ENCODE measurements at regions of chr12 and their contacts with region 1.

Region 1: DNA sequence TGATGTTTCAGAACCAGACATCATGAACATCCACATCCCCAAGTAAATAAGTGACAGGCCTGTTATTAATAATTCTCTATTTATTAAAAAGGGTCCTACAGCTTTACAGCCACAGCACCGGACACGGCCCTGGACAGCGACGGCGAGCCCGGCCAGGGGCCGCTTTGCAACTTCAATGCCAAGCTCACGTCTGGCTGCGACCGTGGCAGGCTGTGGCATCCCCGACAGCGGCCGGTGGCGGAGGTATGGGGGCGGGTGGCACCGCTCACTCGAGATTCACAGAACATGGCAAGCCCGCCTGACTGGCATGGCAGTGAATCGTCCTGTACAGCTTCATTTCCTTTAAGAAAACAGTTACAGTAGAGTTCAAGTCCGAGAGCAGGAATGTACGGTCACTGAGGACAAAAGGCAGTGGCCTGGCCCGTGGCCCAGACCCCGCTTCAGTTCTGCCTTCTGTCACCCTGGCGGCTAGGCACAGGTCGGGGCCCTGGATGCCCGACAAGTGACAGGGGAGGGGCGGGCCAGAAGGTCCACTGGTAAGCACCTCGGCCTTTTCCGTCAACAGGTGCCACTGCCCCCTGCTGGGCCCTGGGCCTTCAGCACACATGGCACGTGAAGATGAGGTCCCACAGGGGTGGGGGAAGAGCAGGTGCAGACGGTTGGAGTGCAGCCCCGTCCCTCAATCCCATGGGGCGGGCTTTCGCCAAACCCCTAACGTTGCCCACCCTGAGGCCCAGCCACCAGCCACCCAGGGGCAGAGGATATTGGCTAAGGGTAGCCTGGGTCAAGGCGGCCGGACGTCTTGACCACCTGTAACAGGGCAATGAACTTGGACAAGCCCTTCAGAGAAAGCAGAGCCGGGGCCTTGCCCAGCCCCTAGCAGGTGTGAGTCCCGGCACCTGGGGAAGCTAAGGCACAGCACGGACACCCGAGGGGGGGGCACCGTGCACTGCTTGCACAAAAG is 30.3 kb downstream of the HIP1R start:
- DNase-seq: peak in 1 of 2 donors; percentile 56
- ATAC-seq: peak in 2 of 3 donors; percentile 29 to 40
- H3K4me3 ChIP-seq: no peak overlapping the region
- H3K4me3 Mint-ChIP-seq: no peak overlapping the region
- H3K27ac ChIP-seq: no peak overlapping the region
- H3K27ac Mint-ChIP-seq: peak overlapping the region; percentile 47 to 81
- H3K4me1 ChIP-seq: peaks cover 32% of the 10 kb centered on the region
- H3K4me1 Mint-ChIP-seq: peaks cover 26 to 33% of the 10 kb centered on the region in 2 donors
- H3K27me3 ChIP-seq: no peaks in the 10 kb centered on the region
- H3K27me3 Mint-ChIP-seq: no peaks in the 10 kb centered on the region
- CTCF ChIP-seq: peak; percentile 20

Region 2: GRCh38 chr12:122293081-122293480 is 572.5 kb before region 1 on chr12:
- intact Hi-C with region 1: no loop called
- DNase-seq: no peak
- ATAC-seq: no peak
- H3K4me3 ChIP-seq: no peak overlapping the region
- H3K4me3 Mint-ChIP-seq: no peak overlapping the region
- H3K27ac ChIP-seq: no peak overlapping the region
- H3K27ac Mint-ChIP-seq: no peak overlapping the region
- H3K4me1 ChIP-seq: no peaks in the 10 kb centered on the region
- H3K4me1 Mint-ChIP-seq: no peaks in the 10 kb centered on the region
- H3K27me3 ChIP-seq: no peaks in the 10 kb centered on the region
- H3K27me3 Mint-ChIP-seq: no peaks in the 10 kb centered on the region
- CTCF ChIP-seq: no peak

Region 3: DNA sequence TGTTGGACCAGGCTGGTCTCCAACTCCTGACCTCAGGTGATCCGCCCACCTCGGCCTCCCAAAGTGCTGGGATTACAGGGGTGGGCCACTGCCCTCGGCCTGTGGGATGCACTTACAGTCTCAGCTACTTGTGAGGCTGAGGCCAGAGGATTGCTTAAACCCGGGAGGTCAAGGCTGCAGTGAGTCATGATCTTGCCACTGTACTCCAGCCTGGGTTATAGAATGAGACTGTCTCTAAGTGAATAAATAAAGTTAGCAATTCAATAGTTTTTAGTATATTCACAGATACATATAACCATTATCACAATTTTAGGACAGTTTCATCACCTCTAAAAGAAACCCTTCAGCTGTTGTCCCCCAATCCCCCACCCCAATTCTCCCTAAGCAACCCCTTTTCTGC is 223.5 kb before region 1 on chr12:
- intact Hi-C with region 1: no loop called
- DNase-seq: no peak
- ATAC-seq: no peak
- H3K4me3 ChIP-seq: no peak overlapping the region
- H3K4me3 Mint-ChIP-seq: no peak overlapping the region
- H3K27ac ChIP-seq: no peak overlapping the region
- H3K27ac Mint-ChIP-seq: no peak overlapping the region
- H3K4me1 ChIP-seq: no peaks in the 10 kb centered on the region
- H3K4me1 Mint-ChIP-seq: peaks cover 0 to 5% of the 10 kb centered on the region in 2 donors
- H3K27me3 ChIP-seq: no peaks in the 10 kb centered on the region
- H3K27me3 Mint-ChIP-seq: peaks cover 0 to 6% of the 10 kb centered on the region in 2 donors
- CTCF ChIP-seq: no peak

Region 4: DNA sequence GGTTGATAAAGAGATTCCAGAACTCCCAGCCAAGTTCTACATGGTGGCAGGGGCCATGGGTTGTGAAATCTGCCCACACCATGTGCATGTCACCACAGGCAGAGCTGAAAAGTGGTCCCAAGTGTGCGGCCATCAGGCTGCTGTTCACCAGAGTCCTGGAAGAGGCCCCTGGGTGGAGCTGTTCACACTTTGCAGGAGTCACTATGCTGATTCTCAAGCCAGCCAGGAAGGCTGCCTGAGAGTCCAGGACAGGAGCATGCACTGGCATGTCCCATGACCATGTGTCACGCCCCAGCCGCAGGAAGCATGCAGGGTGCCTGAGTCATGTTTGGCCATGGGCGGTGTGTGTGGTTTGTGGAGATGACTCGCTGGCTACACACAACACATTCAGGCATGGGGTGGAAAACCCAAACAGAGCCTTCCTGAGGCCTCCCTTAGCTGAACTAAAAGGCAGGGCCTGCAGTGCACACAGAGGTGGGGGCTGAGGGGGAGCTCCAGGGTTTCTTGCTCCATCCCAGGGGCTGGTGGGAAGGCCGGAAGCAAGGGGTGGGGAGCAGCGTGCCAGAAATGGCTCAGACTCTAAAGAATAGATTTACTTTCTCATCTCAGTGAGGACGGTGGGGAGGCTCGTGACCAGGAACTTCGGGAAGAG is 81.3 kb after region 1 on chr12:
- intact Hi-C with region 1: loop called (anchors 1 kb)
- DNase-seq: peak; percentile 71 to 84
- ATAC-seq: peak; percentile 73 to 83 (median 83)
- H3K4me3 ChIP-seq: no peak overlapping the region
- H3K4me3 Mint-ChIP-seq: peak overlapping the region; percentile 89
- H3K27ac ChIP-seq: peak overlapping the region; percentile 23
- H3K27ac Mint-ChIP-seq: peak overlapping the region; percentile 89 to 94
- H3K4me1 ChIP-seq: peaks cover 60% of the 10 kb centered on the region
- H3K4me1 Mint-ChIP-seq: peaks cover 42 to 65% of the 10 kb centered on the region in 2 donors
- H3K27me3 ChIP-seq: no peaks in the 10 kb centered on the region
- H3K27me3 Mint-ChIP-seq: no peaks in the 10 kb centered on the region
- CTCF ChIP-seq: no peak

Region 5: DNA sequence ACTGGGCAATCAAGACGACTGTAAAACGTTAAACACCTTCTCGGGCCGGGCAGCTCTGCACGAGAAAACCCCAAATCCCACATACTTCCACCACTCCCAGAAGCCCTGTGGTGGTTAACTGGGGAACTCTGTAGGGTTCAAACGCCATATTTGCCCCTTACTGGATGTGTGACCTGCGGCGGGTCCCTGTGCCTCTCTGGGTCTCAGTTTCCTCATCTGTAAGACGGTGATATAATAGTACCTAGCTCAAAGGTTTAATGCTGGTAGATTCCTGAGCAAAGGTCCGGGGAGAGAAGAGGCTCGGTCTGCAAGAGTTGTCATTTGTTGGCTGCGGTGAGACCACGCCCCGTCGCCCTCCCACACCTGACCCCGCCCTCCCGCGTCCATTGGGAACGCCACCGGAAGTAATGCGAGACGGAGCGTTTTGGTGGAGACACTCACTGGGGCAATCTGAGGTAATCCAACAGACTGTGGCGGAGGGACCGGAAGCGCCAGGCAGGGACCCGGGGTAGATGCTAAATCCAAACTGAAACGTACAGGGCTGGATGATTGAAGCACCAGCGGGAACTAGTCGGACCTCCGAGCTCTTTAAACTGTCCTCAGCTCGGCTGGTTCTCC is 108.8 kb after region 1 on chr12:
- intact Hi-C with region 1: no loop called
- DNase-seq: peak; percentile 97 to 99
- ATAC-seq: peak; percentile 82 to 94 (median 86)
- H3K4me3 ChIP-seq: peak overlapping the region; percentile 93
- H3K4me3 Mint-ChIP-seq: peak overlapping the region; percentile 95
- H3K27ac ChIP-seq: peak overlapping the region; percentile 98
- H3K27ac Mint-ChIP-seq: peak overlapping the region; percentile 97
- H3K4me1 ChIP-seq: peaks cover 35% of the 10 kb centered on the region
- H3K4me1 Mint-ChIP-seq: peaks cover 4 to 23% of the 10 kb centered on the region in 2 donors
- H3K27me3 ChIP-seq: no peaks in the 10 kb centered on the region
- H3K27me3 Mint-ChIP-seq: no peaks in the 10 kb centered on the region
- CTCF ChIP-seq: no peak